AG04450 (cell line): ENCODE measurements at regions of chr12 and their contacts with region 1.

Region 1: DNA sequence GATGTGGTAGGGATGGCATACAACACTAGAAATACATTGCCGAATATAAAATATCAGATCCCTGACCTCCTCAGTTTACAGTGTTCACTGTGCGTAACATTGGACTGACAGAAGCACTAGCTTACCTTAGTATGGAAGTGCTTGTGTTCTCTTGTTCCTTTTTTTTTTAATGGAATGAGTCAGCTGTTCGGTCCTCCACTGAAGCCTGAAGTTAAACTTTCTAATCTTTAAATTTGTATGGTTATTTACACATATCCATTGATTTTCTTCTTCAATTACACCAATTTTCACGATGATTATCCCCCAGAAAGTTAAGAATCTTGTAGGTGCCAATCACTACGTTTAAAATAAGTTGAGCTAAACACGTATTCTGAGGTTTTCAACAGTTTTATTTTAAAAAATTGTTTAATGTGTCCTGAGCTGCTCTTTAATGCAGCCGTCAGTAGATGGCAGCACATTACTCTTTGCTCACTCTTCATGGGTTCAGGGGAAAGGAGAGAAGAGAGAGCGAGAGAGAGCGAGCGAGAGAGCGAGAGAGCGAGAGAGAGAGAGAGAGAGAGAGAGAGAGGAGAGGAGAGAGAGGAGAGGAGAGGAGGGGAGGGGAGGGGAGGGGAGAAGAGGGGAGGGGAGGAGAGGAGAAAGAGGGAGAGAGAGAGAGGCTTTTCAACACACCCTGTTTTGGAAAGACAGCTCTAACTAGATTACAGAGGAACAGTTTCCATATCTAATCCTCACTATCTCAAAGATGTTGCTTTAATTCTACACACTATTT is 134.7 kb upstream of the SCAF11 start:
- DNase-seq: peak; percentile 58
- H3K4me3 ChIP-seq: no peak overlapping the region
- H3K27ac ChIP-seq: no peak overlapping the region
- H3K27me3 ChIP-seq: no peaks in the 10 kb centered on the region
- CTCF ChIP-seq: peak; percentile 76

Region 2: GRCh38 chr12:46108721-46109120 is 16.3 kb before region 1 on chr12:
- CTCF ChIA-PET with region 1: interaction called, 41 read pairs
- POLR2A ChIA-PET with region 1: no interaction called
- DNase-seq: no peak
- H3K4me3 ChIP-seq: no peak overlapping the region
- H3K27ac ChIP-seq: no peak overlapping the region
- H3K27me3 ChIP-seq: peaks cover 2% of the 10 kb centered on the region
- CTCF ChIP-seq: no peak

Region 3: DNA sequence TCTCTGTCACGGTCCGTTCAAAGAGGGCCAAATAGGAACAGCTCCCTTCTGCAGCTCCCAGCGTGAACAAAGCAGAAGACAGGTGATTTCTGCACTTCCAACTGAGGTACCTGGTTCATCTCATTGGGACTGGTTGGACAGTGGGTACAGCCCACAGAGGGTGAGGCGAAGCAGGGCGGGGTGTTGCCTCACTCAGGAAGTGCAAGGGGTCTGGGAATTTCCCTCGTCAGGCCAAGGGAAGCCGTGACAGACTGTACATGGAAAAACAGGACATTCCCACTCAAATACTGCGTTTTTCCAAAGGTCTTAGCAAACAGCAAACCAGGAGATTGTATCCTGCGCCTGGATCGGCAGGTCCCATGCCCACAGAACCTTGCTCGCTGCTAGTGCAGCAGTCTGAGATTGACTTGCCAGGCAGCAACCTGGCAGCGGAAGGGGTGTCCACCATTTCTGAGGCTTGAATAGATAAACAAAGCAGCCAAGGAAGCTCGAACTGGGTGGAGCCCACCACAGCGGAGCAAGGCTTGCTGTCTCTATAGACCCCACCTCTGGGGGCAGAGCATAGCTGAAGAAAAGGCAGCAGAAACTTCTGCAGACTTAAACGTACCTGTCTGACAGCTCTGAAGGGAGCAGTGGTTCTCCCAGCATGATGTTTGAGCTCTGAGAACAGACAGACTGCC is 121.1 kb after region 1 on chr12:
- CTCF ChIA-PET with region 1: no interaction called
- POLR2A ChIA-PET with region 1: no interaction called
- DNase-seq: no peak
- H3K4me3 ChIP-seq: no peak overlapping the region
- H3K27ac ChIP-seq: no peak overlapping the region
- H3K27me3 ChIP-seq: no peaks in the 10 kb centered on the region
- CTCF ChIP-seq: no peak

Region 4: DNA sequence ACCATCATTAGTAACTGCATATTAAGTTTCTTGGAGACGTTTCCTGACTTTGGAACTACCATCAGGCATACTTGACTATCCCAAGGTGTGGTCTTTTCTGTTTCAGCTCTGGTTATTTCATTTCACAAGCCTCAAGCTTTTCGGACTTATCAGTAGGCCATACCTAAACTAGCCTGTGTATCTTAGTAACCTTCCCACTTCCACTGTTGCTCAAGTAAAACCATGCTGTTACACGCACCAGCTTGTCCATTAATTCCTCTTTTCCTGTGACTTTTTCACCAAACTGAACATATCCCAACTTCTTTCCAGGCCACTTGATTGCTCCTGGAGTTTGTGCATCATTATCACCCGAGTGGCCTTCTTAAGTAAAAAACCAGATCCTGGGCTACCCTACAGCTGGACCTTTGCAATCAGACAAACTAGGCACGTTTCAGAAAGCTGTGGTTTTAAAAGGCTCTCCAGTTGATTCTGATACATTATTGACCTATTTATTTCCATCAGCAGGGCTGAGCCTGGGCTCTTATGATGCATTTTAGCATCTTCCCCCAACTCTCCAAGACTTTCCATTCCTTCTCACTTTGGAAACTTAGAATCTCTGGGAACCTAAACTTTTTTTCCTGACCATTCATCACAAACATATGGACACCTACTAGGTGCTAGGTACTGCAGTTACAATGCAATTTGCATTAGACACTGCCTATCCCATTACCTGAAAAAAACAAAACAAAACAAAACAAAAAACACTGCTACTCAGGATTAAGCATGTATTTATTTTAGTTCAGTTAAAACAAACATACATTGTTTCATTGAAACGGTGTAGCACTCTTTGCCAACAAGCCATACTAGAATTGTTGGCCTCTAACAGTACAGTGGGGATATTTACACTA is 232.6 kb after region 1 on chr12:
- CTCF ChIA-PET with region 1: interaction called, 23 read pairs
- POLR2A ChIA-PET with region 1: interaction called, 3 read pairs
- DNase-seq: peak; percentile 71
- H3K4me3 ChIP-seq: no peak overlapping the region
- H3K27ac ChIP-seq: peak overlapping the region; percentile 41
- H3K27me3 ChIP-seq: no peaks in the 10 kb centered on the region
- CTCF ChIP-seq: no peak

Region 5: DNA sequence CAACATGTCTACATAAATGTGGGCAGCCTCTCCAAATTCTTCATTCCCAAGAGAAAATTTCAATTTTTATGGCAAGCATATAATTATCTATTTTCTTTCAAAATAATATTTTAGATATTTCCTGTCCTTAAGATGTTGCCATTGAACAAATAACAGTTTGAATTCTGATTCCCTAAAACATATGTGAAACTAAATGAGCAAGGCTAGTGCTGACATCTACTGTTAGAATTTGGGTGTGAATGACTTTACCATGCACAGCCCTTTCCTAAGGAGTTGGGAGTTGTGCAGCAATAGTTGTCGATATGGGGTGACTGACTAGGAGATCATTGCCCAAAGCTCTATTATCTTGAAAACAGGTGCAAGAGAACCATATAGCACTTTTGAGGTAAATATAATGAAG is 808.9 kb after region 1 on chr12:
- CTCF ChIA-PET with region 1: interaction called, 17 read pairs
- POLR2A ChIA-PET with region 1: no interaction called
- DNase-seq: no peak
- H3K4me3 ChIP-seq: no peak overlapping the region
- H3K27ac ChIP-seq: no peak overlapping the region
- H3K27me3 ChIP-seq: no peaks in the 10 kb centered on the region
- CTCF ChIP-seq: peak; percentile 65

Region 6: GRCh38 chr12:47021298-47021697 is 896.3 kb after region 1 on chr12:
- CTCF ChIA-PET with region 1: interaction called, 55 read pairs
- POLR2A ChIA-PET with region 1: no interaction called
- DNase-seq: peak; percentile 68
- H3K4me3 ChIP-seq: no peak overlapping the region
- H3K27ac ChIP-seq: no peak overlapping the region
- H3K27me3 ChIP-seq: no peaks in the 10 kb centered on the region
- CTCF ChIP-seq: peak; percentile 66